CD8-positive, alpha-beta T cell (primary cell): ENCODE measurements at regions of chr1 and their contacts with region 1.

Region 1: GRCh38 chr1:96973605-96974004 is 252.0 kb downstream of the PTBP2 start:
- DNase-seq: no peak
- ATAC-seq: no peak
- H3K4me3 ChIP-seq: no peak overlapping the region
- H3K4me3 Mint-ChIP-seq: no peak overlapping the region
- H3K27ac ChIP-seq: no peak overlapping the region
- H3K27ac Mint-ChIP-seq: no peak overlapping the region
- H3K4me1 ChIP-seq: no peaks in the 10 kb centered on the region
- H3K4me1 Mint-ChIP-seq: no peaks in the 10 kb centered on the region
- H3K27me3 ChIP-seq: peaks cover 0 to 7% of the 10 kb centered on the region in 2 experiments
- H3K27me3 Mint-ChIP-seq: peaks cover 26% of the 10 kb centered on the region
- CTCF ChIP-seq: no peak

Region 2: GRCh38 chr1:96955307-96956012 is 18.1 kb before region 1 on chr1:
- CTCF ChIA-PET with region 1: no interaction called
- POLR2A ChIA-PET with region 1: no interaction called
- intact Hi-C with region 1: no loop called
- DNase-seq: no peak
- ATAC-seq: no peak
- H3K4me3 ChIP-seq: no peak overlapping the region
- H3K4me3 Mint-ChIP-seq: no peak overlapping the region
- H3K27ac ChIP-seq: no peak overlapping the region
- H3K27ac Mint-ChIP-seq: no peak overlapping the region
- H3K4me1 ChIP-seq: no peaks in the 10 kb centered on the region
- H3K4me1 Mint-ChIP-seq: no peaks in the 10 kb centered on the region
- H3K27me3 ChIP-seq: no peaks in the 10 kb centered on the region
- H3K27me3 Mint-ChIP-seq: no peaks in the 10 kb centered on the region
- CTCF ChIP-seq: no peak

Region 3: DNA sequence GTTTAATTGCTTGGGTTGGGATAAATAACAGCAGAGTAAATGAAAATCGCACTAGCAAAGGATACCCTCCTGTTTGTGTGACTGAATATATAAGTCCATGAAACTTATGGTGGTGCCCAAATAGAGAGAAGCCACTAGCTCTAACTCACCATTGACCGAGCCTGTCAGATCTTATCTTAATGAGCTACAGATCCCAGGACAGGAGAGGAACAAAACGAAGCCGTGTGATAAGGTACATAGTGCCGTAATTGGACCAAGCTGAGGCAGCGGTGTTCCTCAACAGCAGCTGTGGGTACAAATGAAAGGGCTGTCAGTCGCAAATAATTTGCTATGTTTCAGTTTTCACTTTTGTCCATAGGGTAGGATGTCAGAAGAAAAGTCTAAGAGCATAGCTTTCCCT is 24.1 kb after region 1 on chr1:
- CTCF ChIA-PET with region 1: no interaction called
- POLR2A ChIA-PET with region 1: no interaction called
- intact Hi-C with region 1: loop called in 1 of 2 experiments (anchors 2 kb)
- DNase-seq: no peak
- ATAC-seq: no peak
- H3K4me3 ChIP-seq: no peak overlapping the region
- H3K4me3 Mint-ChIP-seq: no peak overlapping the region
- H3K27ac ChIP-seq: no peak overlapping the region
- H3K27ac Mint-ChIP-seq: no peak overlapping the region
- H3K4me1 ChIP-seq: no peaks in the 10 kb centered on the region
- H3K4me1 Mint-ChIP-seq: no peaks in the 10 kb centered on the region
- H3K27me3 ChIP-seq: peaks cover 0 to 3% of the 10 kb centered on the region in 2 experiments
- H3K27me3 Mint-ChIP-seq: peaks cover 15% of the 10 kb centered on the region
- CTCF ChIP-seq: no peak

Region 4: GRCh38 chr1:97647776-97648175 is 674.2 kb after region 1 on chr1:
- CTCF ChIA-PET with region 1: no interaction called
- POLR2A ChIA-PET with region 1: no interaction called
- intact Hi-C with region 1: no loop called
- DNase-seq: no peak
- ATAC-seq: no peak
- H3K4me3 ChIP-seq: no peak overlapping the region
- H3K4me3 Mint-ChIP-seq: no peak overlapping the region
- H3K27ac ChIP-seq: no peak overlapping the region
- H3K27ac Mint-ChIP-seq: no peak overlapping the region
- H3K4me1 ChIP-seq: no peaks in the 10 kb centered on the region
- H3K4me1 Mint-ChIP-seq: no peaks in the 10 kb centered on the region
- H3K27me3 ChIP-seq: no peaks in the 10 kb centered on the region
- H3K27me3 Mint-ChIP-seq: no peaks in the 10 kb centered on the region
- CTCF ChIP-seq: no peak